Activated CD4-positive, alpha-beta T cell treated with anti-CD3 and anti-CD28 coated beads for 36 hours (primary cell): ENCODE measurements at regions of chr7 and their contacts with region 1.

Region 1: GRCh38 chr7:130982160-130982638 is 248.2 kb upstream of the KLF14 start:
- DNase-seq: peak; percentile 39
- ATAC-seq: peak; percentile 81
- H3K4me3 Mint-ChIP-seq: no peak overlapping the region
- H3K27ac Mint-ChIP-seq: no peak overlapping the region
- H3K4me1 Mint-ChIP-seq: peaks cover 54% of the 10 kb centered on the region
- H3K27me3 Mint-ChIP-seq: no peaks in the 10 kb centered on the region

Region 2: DNA sequence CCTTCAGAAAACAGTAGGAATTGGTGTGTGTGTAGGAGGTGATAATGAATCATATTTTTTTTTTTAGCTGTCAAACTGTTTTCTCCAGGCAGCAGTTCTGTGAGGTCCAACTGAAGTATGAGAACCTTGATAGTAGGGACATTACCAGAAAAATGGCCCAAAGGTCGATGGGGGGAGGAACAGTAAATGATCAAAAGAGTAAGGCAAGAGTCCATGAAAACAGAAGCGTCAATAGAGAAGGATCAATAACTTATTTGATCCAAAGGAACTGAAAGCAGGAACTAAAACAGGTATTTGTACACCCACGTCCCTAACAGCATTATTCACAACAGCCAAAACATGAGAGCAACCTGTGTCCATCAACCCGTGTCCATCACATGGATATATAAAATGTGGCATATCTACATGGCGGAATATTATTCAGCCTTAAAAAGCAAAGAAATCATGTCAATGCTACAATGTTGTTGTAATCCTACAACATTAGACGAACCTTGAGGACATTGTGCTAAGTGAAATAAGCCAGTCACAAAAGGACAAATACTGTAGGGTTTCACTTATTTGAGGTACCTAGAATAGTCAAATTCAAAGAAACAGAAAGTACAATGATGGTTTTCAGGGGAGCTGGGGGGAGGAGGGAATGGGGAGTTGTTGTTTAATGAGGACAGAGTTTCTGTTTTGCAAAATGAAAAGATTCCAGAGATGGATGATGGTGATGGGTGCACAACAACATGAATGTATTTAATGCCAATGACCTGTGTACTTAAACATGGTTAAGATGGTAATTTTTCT is 34.2 kb before region 1 on chr7:
- CTCF ChIA-PET with region 1: interaction called, 12 read pairs
- POLR2A ChIA-PET with region 1: interaction called, 3 read pairs
- intact Hi-C with region 1: no loop called
- DNase-seq: no peak
- ATAC-seq: peak; percentile 12
- H3K4me3 Mint-ChIP-seq: peak overlapping the region; percentile 58
- H3K27ac Mint-ChIP-seq: peak overlapping the region; percentile 85
- H3K4me1 Mint-ChIP-seq: peaks cover 60% of the 10 kb centered on the region
- H3K27me3 Mint-ChIP-seq: no peaks in the 10 kb centered on the region

Region 3: DNA sequence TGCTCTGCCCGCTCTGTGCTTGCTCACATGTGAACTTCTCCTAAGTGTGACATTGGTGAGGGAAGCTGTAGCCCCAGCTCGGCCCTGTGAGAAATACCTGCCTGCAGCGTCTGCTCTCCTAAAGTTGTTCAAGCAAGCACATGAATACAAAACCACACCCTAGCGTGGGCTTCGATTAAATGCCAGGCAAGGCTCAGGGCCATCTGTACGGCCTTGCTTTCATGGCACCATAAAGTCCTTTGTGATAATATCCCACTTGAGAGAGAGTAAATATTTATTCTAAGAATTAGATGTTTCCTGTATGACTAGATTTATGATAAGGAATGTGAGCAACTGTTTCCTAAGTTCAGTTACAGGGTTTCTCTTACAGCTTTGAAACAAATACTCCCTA is 14.6 kb after region 1 on chr7:
- CTCF ChIA-PET with region 1: interaction called, 144 read pairs
- POLR2A ChIA-PET with region 1: interaction called, 3 read pairs
- intact Hi-C with region 1: no loop called
- DNase-seq: peak; percentile 67
- ATAC-seq: peak; percentile 66
- H3K4me3 Mint-ChIP-seq: peak overlapping the region; percentile 64
- H3K27ac Mint-ChIP-seq: peak overlapping the region; percentile 92
- H3K4me1 Mint-ChIP-seq: peaks cover 86% of the 10 kb centered on the region
- H3K27me3 Mint-ChIP-seq: no peaks in the 10 kb centered on the region

Region 4: GRCh38 chr7:131015655-131015954 is 33.4 kb after region 1 on chr7:
- CTCF ChIA-PET with region 1: interaction called, 16 read pairs
- POLR2A ChIA-PET with region 1: no interaction called
- intact Hi-C with region 1: no loop called
- DNase-seq: no peak
- ATAC-seq: no peak
- H3K4me3 Mint-ChIP-seq: no peak overlapping the region
- H3K27ac Mint-ChIP-seq: peak overlapping the region; percentile 53
- H3K4me1 Mint-ChIP-seq: peaks cover 89% of the 10 kb centered on the region
- H3K27me3 Mint-ChIP-seq: no peaks in the 10 kb centered on the region

Region 5: GRCh38 chr7:131424219-131424822 is 442.1 kb after region 1 on chr7:
- CTCF ChIA-PET with region 1: no interaction called
- POLR2A ChIA-PET with region 1: no interaction called
- intact Hi-C with region 1: loop called in 1 of 2 experiments (anchors 1 kb)
- DNase-seq: no peak
- ATAC-seq: peak; percentile 92
- H3K4me3 Mint-ChIP-seq: no peak overlapping the region
- H3K27ac Mint-ChIP-seq: no peak overlapping the region
- H3K4me1 Mint-ChIP-seq: peaks cover 8% of the 10 kb centered on the region
- H3K27me3 Mint-ChIP-seq: no peaks in the 10 kb centered on the region